ENCODE measurements at regions of chr20 and their contacts with region 1.

Region 1: DNA sequence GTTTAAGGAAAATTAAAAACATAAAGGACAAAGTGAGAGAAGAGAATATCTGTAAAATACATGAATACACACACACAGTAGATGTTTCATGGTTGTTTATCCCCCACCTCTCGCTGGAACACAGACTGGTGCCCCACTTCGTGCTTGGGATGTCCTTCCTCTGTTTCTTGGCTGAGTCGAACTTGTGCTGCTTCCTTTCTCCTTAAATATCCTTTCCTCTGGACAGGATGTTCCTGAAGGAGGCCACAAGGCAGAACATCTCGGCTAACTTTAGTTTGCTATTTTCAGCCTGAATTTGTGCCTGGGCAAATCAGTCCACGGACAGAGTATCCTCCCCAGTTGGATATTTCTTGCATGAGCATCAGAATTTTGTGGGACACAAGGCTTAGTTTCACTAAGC is 54.7 kb upstream of the ZMYND8 start:
- DNase-seq: no peak
- ATAC-seq: no peak
- H3K4me3 Mint-ChIP-seq: peak overlapping the region; percentile 81
- H3K27ac Mint-ChIP-seq: peak overlapping the region; percentile 100
- H3K4me1 Mint-ChIP-seq: peaks cover 85% of the 10 kb centered on the region
- H3K27me3 Mint-ChIP-seq: no peaks in the 10 kb centered on the region
- CTCF ChIP-seq: no peak

Region 2: GRCh38 chr20:46689082-46689754 is 721.9 kb before region 1 on chr20 and contains the start of gene TP53RK:
- CTCF ChIA-PET with region 1: no interaction called
- POLR2A ChIA-PET with region 1: no interaction called
- intact Hi-C with region 1: no loop called
- DNase-seq: peak; percentile 89
- ATAC-seq: peak; percentile 97
- H3K4me3 Mint-ChIP-seq: peak within 1 kb of the TSS; percentile 97
- H3K27ac Mint-ChIP-seq: peak within 1 kb of the TSS; percentile 95
- H3K4me1 Mint-ChIP-seq: peaks cover 43% of the 10 kb centered on the region
- H3K27me3 Mint-ChIP-seq: no peaks in the 10 kb centered on the region
- CTCF ChIP-seq: no peak
- total RNA-seq, gene TP53RK: 18.6 and 18.8 TPM in 2 replicates

Region 3: DNA sequence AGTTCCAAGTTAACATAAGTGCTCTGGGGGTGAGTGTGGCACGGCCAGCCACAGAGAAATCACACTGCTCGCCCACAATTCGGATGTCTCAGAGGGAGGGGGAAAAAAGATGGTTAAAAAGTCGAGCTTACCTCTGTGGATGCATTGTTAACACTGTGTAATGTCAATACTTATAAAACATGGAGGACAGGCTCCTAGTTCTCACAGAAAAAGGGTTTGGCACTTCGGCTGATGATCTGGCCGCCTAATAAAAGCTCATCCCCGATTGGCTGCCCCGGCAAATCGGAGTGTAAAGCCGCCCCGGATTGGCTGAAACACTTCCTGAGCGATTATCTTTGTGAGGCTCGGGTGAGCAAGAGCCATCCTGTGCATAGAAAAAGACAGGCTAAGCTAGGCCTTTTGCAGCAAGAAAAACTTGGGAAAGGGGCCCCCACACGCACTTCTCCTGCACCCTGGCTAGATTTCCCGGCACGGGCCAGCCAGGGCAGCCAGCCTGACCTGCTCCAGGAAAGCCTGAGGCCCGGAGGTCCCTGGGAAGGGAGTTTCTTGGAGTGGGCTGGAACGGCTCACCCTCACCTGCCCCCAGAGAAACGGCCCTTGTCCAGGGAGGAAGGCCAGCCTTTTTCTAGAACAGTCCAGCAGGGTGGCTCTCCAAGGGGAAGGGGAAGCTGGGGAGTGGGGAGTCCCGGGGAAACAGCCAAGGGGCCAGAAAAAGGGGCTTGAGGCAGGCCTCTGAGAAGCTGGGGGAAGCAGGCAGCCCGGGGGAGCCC is 54.5 kb before region 1 on chr20 and contains the start of gene ZMYND8:
- CTCF ChIA-PET with region 1: no interaction called
- POLR2A ChIA-PET with region 1: interaction called, 37 read pairs
- intact Hi-C with region 1: loop called (anchors 2 kb)
- DNase-seq: peak; percentile 96
- ATAC-seq: peak; percentile 81
- H3K4me3 Mint-ChIP-seq: no peak within 1 kb of the TSS
- H3K27ac Mint-ChIP-seq: no peak within 1 kb of the TSS
- H3K4me1 Mint-ChIP-seq: peaks cover 55% of the 10 kb centered on the region
- H3K27me3 Mint-ChIP-seq: no peaks in the 10 kb centered on the region
- CTCF ChIP-seq: no peak
- total RNA-seq, gene ZMYND8: 42.6 and 44.7 TPM in 2 replicates

Region 4: GRCh38 chr20:47453142-47453782 is 42.1 kb after region 1 on chr20:
- CTCF ChIA-PET with region 1: interaction called, 5 read pairs
- POLR2A ChIA-PET with region 1: interaction called, 18 read pairs
- intact Hi-C with region 1: loop called (anchors 5 kb)
- DNase-seq: no peak
- ATAC-seq: peak; percentile 78
- H3K4me3 Mint-ChIP-seq: peak overlapping the region; percentile 49
- H3K27ac Mint-ChIP-seq: peak overlapping the region; percentile 80
- H3K4me1 Mint-ChIP-seq: peaks cover 55% of the 10 kb centered on the region
- H3K27me3 Mint-ChIP-seq: no peaks in the 10 kb centered on the region
- CTCF ChIP-seq: no peak

Region 5: GRCh38 chr20:47487175-47487917 is 76.2 kb after region 1 on chr20:
- CTCF ChIA-PET with region 1: interaction called, 9 read pairs
- POLR2A ChIA-PET with region 1: interaction called, 142 read pairs
- intact Hi-C with region 1: loop called (anchors 1 kb)
- DNase-seq: peak; percentile 42
- ATAC-seq: peak; percentile 77
- H3K4me3 Mint-ChIP-seq: peak overlapping the region; percentile 72
- H3K27ac Mint-ChIP-seq: peak overlapping the region; percentile 97
- H3K4me1 Mint-ChIP-seq: peaks cover 79% of the 10 kb centered on the region
- H3K27me3 Mint-ChIP-seq: no peaks in the 10 kb centered on the region
- CTCF ChIP-seq: no peak

Region 6: DNA sequence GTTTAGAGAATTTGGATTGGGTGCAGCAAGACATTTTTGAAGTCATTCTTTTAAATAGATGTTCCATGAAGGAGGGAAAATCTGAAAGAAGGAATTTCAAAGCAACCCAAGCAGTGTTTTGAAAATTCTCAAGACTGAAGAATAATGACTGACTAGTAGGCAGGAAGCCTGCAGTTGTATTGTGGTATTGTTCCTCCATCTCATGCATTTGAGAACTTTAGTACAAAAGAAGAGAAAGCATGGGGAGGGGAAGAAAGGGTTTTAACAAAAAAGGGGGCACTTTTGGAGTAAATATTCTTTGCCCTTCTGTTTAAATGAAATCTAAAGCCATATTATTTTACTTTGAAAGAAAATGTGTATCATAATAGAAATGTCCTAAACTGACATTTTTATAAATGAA is 97.1 kb after region 1 on chr20:
- CTCF ChIA-PET with region 1: interaction called, 11 read pairs
- POLR2A ChIA-PET with region 1: interaction called, 234 read pairs
- intact Hi-C with region 1: no loop called
- DNase-seq: no peak
- ATAC-seq: no peak
- H3K4me3 Mint-ChIP-seq: peak overlapping the region; percentile 37
- H3K27ac Mint-ChIP-seq: peak overlapping the region; percentile 64
- H3K4me1 Mint-ChIP-seq: peaks cover 84% of the 10 kb centered on the region
- H3K27me3 Mint-ChIP-seq: no peaks in the 10 kb centered on the region
- CTCF ChIP-seq: no peak

Region 7: GRCh38 chr20:48921151-48921898 is 1510.2 kb after region 1 on chr20 and contains the start of gene ARFGEF2:
- CTCF ChIA-PET with region 1: no interaction called
- POLR2A ChIA-PET with region 1: no interaction called
- intact Hi-C with region 1: loop called (anchors 5 kb)
- DNase-seq: peak; percentile 96
- ATAC-seq: peak; percentile 90
- H3K4me3 Mint-ChIP-seq: peak within 1 kb of the TSS; percentile 93
- H3K27ac Mint-ChIP-seq: peak within 1 kb of the TSS; percentile 95
- H3K4me1 Mint-ChIP-seq: peaks cover 58% of the 10 kb centered on the region
- H3K27me3 Mint-ChIP-seq: no peaks in the 10 kb centered on the region
- CTCF ChIP-seq: no peak
- total RNA-seq, gene ARFGEF2: 30.8 and 39.0 TPM in 2 replicates